ENCODE measurements at regions of chr6 and their contacts with region 1.

Region 1: GRCh38 chr6:145749632-145750031 is 14.3 kb upstream of the EPM2A start:
- DNase-seq: no peak
- ATAC-seq: peak; percentile 36

Region 2: DNA sequence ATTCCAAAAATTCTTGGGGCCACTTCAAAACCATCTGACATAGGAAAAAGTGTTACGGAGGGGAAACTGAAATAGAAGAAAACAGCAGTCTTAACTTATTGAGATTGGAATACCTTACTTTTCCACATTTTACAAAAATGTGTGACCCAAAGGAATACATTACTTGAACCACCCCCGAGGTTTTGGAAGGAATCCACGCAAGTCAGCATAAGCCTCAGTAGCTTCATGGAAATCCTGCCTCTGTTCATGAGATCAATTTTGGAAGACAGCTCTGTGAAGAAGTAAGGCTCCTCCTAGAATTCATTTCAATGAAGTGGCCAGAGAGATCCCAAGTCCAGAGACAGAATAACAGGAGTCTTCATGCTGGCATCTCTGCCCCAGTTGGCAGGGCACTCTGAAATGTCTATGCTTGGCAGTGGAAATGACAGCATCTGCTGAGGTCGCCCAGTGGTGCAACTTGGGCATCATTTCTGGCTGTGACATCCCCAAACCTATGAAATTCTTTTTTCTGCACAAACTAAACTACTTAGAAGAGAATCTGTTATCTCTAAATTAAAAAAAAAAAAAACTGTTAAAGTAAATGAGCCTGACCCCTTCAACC is 146.8 kb before region 1 on chr6:
- intact Hi-C with region 1: no loop called
- DNase-seq: peak; percentile 31
- ATAC-seq: no peak

Region 3: GRCh38 chr6:145621776-145622175 is 127.9 kb before region 1 on chr6:
- intact Hi-C with region 1: no loop called
- DNase-seq: no peak
- ATAC-seq: no peak

Region 4: DNA sequence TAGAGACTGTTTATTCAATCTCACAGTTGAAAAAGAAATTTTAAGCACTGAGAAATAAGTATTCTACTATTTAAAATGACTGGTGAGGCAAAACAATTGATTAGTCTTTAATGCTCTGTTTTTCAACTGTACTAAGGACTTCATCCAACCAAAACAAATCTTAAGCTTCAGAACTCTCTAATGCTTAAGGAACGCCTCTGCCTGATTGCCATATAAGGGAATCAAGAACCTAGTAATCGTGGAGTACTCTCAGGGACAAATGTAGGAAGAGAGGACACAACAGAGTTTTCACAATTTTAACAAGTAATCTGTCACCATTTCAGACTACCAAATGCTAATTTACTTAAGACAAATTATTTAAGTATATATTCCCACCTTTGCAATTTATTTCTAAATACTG is 48.9 kb after region 1 on chr6:
- intact Hi-C with region 1: loop called (anchors 10 kb)
- DNase-seq: no peak
- ATAC-seq: no peak

Region 5: DNA sequence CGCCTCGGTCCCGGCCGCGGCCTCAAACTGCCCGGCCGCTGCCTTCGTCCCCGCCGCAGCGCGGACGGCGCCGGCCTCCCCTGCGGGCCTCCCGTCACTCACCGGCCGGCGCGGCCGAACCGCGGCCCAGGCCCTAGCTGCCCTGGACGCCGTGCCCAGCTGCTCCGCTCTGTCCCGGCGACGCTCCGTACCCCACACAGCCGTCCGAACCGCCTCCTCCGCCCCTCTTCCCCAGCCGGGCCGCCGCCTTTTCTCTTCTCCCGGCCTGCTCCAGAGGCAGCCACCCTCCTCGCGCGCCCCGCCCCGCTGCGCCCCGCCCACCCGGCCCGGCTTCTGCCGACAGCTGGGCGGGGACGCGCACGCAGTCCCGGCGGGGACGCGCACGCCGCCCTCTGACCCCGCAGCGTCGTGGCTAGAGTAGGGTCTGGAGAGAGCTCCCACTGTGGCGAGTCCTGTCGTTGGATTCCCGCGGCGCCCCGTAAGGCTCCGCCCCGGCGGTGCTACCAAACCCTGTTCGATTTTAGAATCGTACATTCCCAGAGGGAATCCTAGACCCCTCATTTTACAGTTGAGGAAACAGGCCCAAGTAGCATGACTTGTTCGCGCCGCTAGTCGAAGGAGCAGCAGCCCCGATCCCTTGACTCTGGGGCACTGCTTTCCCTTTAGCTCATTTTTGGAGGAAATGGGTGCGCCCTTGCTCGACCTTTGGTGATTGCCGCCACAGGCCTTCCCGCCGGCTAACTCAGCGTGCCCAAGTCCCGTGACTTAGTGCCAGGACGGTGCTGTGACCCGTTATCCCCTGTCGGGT is 65.1 kb after region 1 on chr6 and contains the start of gene FBXO30:
- intact Hi-C with region 1: no loop called
- DNase-seq: peak; percentile 95
- ATAC-seq: peak; percentile 98
- total RNA-seq, gene FBXO30: 12.8 TPM

Measured in Right ventricle myocardium superior (tissue), 1 donor.